ENCODE measurements at regions of chr3 and their contacts with region 1.

Region 1: DNA sequence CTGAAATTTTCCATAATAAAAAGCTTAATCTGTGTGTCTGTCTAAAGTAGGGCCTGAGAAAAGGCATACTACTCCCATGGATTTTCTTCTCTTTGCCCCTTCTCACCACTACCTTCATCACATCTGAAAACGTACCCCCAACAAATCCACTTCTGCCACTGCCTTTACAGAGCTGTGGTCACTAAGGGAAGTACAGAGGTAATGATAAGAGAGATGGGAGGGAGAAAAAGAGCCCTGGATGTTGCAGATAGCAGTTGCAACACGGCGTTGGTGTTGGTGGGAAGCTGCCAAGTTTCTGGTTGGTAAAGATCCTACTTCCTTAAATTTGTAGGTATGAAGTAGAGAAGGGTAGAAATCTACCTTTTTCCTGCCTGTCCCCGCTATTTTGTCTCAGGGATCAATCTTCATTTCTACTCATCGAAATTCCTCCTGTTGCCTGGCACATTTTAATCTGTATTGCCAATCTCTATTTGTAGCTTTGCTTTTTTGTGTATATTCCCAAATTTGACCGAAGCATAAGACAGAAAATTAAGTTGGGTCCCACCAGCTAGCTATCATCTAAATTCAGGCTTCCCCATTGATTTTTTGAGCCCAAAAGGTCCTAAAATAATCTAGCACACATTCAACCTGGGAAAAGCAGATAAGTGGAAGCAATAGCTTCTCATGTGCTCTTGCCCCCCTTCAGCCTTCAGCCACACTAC is 102.9 kb downstream of the TFDP2 start:
- DNase-seq: no peak
- ATAC-seq: no peak
- H3K4me3 Mint-ChIP-seq: no peak overlapping the region
- H3K27ac Mint-ChIP-seq: no peak overlapping the region
- H3K4me1 Mint-ChIP-seq: no peaks in the 10 kb centered on the region
- H3K27me3 Mint-ChIP-seq: no peaks in the 10 kb centered on the region

Region 2: DNA sequence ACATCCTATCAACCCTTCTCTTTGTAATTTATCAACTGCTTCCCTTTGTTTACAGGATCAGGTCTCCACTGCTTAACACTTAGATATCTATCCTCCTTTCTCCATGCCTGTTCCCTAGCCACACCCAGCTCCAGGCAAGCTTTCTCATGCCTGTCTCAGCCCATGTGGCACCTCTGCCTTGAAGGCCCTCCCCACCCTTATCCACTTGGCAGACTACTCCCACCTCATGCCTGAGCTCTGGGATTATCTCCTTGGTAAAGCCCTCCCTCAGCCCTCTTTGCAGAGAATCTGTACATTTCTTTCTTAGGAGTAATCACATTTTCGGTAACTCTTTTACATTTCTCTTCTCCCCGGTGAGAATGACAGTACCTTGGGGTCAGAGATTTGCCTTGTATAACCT is 74.1 kb before region 1 on chr3:
- CTCF ChIA-PET with region 1: no interaction called
- POLR2A ChIA-PET with region 1: no interaction called
- intact Hi-C with region 1: loop called in 1 of 2 experiments (anchors 5 kb)
- DNase-seq: no peak
- ATAC-seq: no peak
- H3K4me3 Mint-ChIP-seq: no peak overlapping the region
- H3K27ac Mint-ChIP-seq: no peak overlapping the region
- H3K4me1 Mint-ChIP-seq: no peaks in the 10 kb centered on the region
- H3K27me3 Mint-ChIP-seq: no peaks in the 10 kb centered on the region

Measured in activated CD4-positive, alpha-beta T cell treated with anti-CD3 and anti-CD28 coated beads for 36 hours (primary cell).